AG04449 (cell line): ENCODE measurements at regions of chr5 and their contacts with region 1.

Region 1: DNA sequence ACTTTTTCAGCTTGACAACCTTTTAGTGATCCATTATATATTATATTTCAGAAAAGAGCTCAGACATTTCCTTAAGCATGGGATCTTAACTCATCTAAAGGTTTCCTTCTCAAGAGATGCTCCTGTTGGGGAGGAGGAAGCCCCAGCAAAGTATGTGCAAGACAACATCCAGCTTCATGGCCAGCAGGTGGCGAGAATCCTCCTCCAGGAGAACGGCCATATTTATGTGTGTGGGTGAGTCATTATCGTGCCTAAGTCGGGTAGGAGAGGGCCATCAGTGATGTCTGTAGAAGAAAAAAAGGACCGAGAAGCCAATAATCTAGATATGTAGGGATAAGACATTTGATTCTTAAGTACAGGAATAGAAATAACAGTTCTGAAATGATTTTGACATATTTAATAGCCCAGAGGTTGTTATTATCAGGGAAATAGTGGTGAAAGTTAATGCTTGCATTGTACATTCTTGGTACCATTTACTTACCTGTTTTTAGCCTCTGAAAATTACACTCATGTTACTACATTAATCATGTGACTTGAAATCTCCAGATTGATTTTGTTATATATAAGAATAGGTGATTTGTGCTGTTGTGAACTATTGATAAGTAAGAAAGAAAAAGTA is 28.2 kb downstream of the MTRR start:
- DNase-seq: no peak
- H3K4me3 ChIP-seq: no peak overlapping the region
- CTCF ChIP-seq: peak; percentile 54

Region 2: DNA sequence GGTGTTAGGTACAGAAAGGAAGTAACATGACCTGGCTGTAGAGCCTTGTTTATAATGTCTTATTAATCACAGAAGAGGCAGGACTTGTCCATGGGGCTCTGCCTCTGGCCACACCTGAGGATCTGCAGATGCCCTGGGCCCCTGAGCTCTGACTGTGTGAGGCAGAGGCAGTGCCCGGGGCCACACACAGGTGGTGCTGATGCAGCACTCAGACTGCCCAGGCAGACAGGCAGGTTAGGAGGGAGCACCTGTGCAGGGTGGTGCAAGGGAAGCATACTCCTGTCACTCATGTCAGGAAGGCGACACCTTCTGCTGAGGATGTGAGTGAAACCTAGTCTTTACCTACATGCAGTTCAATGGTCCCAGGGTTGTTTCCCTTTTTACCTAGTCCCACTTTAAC is 134.9 kb before region 1 on chr5:
- CTCF ChIA-PET with region 1: no interaction called
- POLR2A ChIA-PET with region 1: no interaction called
- DNase-seq: no peak
- H3K4me3 ChIP-seq: no peak overlapping the region
- CTCF ChIP-seq: no peak

Region 3: DNA sequence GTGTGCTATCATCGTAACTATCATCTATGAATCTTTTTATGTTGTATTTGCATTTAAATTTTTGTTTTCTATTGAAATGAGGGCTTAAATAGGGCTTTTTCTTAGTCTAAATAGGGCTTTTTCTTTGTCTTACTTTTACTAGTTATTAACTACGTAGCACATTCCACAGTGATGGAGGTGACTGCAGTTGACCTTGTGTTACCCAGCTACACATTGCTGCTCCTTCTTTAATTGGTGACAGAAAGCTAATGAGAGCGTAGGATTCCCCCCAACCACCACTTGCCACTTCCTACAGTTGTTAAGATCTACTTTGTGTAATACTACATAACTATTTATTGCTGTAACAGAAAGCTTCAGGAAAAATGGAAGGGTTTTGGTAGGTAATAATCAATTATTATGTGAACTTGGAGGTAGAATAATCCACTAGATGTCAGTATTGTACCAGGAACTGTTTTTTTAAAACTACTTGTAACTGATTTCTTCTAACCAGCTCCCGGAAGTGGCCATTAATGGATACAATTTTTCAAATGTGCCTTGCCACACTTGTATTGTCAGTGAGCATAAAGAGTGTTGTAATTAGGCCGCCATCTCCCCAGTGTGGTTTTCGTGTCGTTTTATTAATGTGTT is 10.2 kb before region 1 on chr5:
- CTCF ChIA-PET with region 1: interaction called, 25 read pairs
- POLR2A ChIA-PET with region 1: no interaction called
- DNase-seq: no peak
- H3K4me3 ChIP-seq: no peak overlapping the region
- CTCF ChIP-seq: peak; percentile 18